ENCODE measurements at regions of chr16 and their contacts with region 1.

Region 1: DNA sequence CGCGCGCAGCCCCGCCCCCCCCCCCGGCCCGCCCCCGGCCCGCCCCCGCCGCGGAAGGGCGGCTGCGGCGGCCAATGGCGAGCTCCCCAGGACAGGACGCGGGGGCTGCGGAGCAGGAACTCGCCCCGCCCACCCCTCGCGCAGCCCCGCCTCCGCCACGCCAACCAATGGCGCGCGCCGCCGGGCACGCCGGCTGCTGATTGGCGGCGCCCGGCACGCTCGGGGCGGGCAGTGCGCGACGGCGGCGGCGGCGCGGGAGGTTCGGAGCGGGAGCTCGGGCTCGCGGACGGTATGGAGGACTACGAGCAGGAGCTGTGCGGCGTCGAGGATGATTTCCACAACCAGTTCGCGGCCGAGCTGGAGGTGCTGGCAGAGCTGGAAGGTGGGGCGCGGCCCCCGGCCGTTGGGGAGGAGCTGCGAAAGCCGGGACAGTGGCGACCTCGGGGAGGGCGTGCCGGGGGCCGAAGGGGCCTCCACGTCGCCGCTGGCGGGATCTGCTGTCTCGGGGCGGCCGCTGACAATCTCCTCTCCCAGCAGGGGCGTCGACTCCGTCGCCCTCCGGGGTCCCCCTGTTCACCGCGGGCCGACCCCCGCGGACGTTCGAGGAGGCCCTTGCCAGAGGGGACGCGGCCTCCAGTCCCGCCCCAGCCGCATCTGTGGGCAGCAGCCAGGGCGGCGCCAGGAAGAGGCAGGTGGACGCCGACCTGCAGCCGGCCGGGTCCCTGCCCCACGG is at the start of gene CHTF18:
- DNase-seq: peak; percentile 77 to 97 (median 88)
- H3K4me3 ChIP-seq: peak within 1 kb of the TSS; percentile 72 to 99 (median 88)
- H3K27ac ChIP-seq: peak within 1 kb of the TSS in 41 of 59 donors; percentile 26 to 87 (median 66)
- H3K27me3 ChIP-seq: no peaks in the 10 kb centered on the region
- CTCF ChIP-seq: peak in 2 of 56 donors; percentile 5 to 8
- total RNA-seq, gene CHTF18: 9.5 to 68.5 (median 17.6) TPM

Region 2: GRCh38 chr16:740764-741505 is 47.6 kb before region 1 on chr16 and contains the start of gene CIAO3:
- intact Hi-C with region 1: loop called (anchors 5 kb)
- DNase-seq: peak; percentile 73 to 90 (median 86)
- H3K4me3 ChIP-seq: peak within 1 kb of the TSS; percentile 69 to 99 (median 94)
- H3K27ac ChIP-seq: peak within 1 kb of the TSS in 53 of 59 donors; percentile 19 to 91 (median 74)
- H3K27me3 ChIP-seq: no peaks in the 10 kb centered on the region
- CTCF ChIP-seq: peak; percentile 86 to 100 (median 99)
- total RNA-seq, gene CIAO3: 32.4 to 98.2 (median 48.8) TPM